Naive thymus-derived CD4-positive, alpha-beta T cell (primary cell): ENCODE measurements at regions of chr17 and their contacts with region 1.

Region 1: GRCh38 chr17:6913608-6914443 is 82.0 kb upstream of the ALOX12 start:
- DNase-seq: peak; percentile 48 to 76 (median 70)
- ATAC-seq: peak; percentile 90
- H3K4me3 ChIP-seq: peak overlapping the region; percentile 45
- H3K4me3 Mint-ChIP-seq: peak overlapping the region; percentile 81 to 93 (median 88)
- H3K27ac ChIP-seq: no peak overlapping the region
- H3K27ac Mint-ChIP-seq: peak overlapping the region in 5 of 9 donors; percentile 12 to 88 (median 38)
- H3K4me1 ChIP-seq: peaks cover 0 to 6% of the 10 kb centered on the region in 2 donors
- H3K4me1 Mint-ChIP-seq: peaks cover 9 to 24% (median 19%) of the 10 kb centered on the region in 7 donors
- H3K27me3 ChIP-seq: no peaks in the 10 kb centered on the region
- H3K27me3 Mint-ChIP-seq: peaks cover 0 to 43% (median 0%) of the 10 kb centered on the region in 5 donors

Region 2: GRCh38 chr17:6924208-6924607 is 10.4 kb after region 1 on chr17:
- CTCF ChIA-PET with region 1: interaction called, 12 read pairs
- POLR2A ChIA-PET with region 1: no interaction called
- intact Hi-C with region 1: no loop called
- DNase-seq: peak in 7 of 9 donors; percentile 37 to 58 (median 43)
- ATAC-seq: peak; percentile 65
- H3K4me3 ChIP-seq: no peak overlapping the region
- H3K4me3 Mint-ChIP-seq: peak overlapping the region; percentile 21 to 70 (median 55)
- H3K27ac ChIP-seq: no peak overlapping the region
- H3K27ac Mint-ChIP-seq: peak overlapping the region in 7 of 9 donors; percentile 2 to 56 (median 17)
- H3K4me1 ChIP-seq: peaks cover 3 to 18% of the 10 kb centered on the region in 2 donors
- H3K4me1 Mint-ChIP-seq: peaks cover 5 to 40% (median 34%) of the 10 kb centered on the region in 7 donors
- H3K27me3 ChIP-seq: no peaks in the 10 kb centered on the region
- H3K27me3 Mint-ChIP-seq: peaks cover 0 to 19% (median 0%) of the 10 kb centered on the region in 5 donors

Region 3: DNA sequence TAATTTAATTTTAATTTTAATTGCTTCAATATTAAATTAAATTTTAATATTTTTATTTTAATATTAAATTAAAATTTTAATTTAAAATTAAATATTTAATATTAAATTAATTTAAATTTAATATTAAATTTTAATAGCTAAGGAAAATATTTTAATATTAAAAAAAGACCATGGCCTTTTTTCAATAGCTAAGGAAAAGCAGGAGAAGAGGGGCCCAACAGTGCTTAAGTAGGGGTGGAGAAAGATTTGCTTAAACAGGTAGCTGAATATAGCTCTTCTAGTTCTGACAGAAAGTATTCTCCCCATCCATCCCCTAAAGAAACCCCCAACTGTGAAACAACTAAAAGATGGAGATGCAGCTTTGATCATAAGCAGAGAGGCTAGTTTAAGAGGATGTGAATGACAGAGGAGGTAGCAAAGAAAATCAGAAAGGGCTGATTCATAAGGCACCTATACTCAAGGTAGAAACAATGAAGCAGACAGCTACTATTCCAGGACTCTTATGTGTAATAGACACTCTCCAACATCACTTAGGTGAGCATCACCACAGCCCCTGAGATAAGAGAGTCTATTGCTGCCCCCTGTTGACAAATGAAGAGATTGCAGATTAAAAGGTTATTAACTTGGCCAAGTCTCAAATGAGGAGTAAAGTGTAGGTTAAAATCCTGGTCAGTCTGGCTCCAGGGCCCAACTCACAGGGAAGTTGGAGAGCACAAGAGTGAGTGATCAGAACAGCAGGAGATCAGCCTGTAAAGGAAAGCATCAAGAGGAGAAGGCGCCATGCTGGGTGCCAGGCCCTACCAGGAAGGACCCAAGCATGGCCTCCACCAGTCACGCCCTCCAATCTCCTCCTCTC is 90.8 kb after region 1 on chr17:
- CTCF ChIA-PET with region 1: interaction called, 121 read pairs
- POLR2A ChIA-PET with region 1: interaction called, 7 read pairs
- intact Hi-C with region 1: loop called (anchors 1 kb)
- DNase-seq: peak in 7 of 9 donors; percentile 67 to 80 (median 77)
- ATAC-seq: peak; percentile 98
- H3K4me3 ChIP-seq: no peak overlapping the region
- H3K4me3 Mint-ChIP-seq: no peak overlapping the region
- H3K27ac ChIP-seq: no peak overlapping the region
- H3K27ac Mint-ChIP-seq: peak overlapping the region in 8 of 9 donors; percentile 5 to 60 (median 31)
- H3K4me1 ChIP-seq: no peaks in the 10 kb centered on the region
- H3K4me1 Mint-ChIP-seq: peaks cover 14 to 42% (median 27%) of the 10 kb centered on the region in 7 donors
- H3K27me3 ChIP-seq: no peaks in the 10 kb centered on the region
- H3K27me3 Mint-ChIP-seq: no peaks in the 10 kb centered on the region

Region 4: DNA sequence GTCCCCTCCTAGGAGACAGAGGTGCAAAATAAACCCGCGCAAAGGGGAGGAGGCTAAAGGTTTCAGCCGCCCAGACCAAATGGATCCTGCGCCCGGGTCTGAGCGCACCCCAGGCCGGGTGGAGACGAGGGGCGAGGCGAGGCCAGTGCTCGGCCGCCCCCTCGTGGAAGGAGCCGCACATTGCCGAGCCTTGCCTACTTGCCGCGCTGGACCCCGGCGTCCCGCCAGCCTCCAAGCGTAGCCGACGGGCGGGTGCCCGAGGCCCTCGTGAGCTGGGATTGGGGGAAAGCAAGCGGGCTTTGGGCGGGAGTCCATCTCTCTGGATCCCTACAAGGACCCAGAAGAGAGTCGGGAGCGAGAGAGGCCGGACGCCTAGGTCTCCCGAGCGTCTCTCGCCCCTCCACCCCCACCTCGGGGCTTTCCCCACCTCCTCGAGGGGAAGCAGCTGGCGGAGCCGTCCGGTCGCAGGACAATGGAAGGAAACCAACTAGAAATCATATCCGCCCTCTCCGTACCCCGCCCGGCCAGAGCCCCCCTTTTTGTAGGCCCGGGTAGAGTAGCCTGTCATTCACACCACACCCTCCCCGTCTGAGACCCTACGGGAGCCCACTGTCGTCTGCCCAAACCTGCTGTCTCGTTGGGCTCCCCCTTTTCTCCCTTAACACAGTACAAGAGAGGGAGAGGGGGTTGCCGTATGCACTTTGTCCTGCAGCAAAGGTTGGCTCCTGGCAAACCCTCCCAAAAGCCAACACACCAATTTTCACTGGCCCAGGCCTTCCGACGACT is 108.4 kb after region 1 on chr17:
- CTCF ChIA-PET with region 1: interaction called, 38 read pairs
- POLR2A ChIA-PET with region 1: interaction called, 3 read pairs
- intact Hi-C with region 1: loop called (anchors 1 kb)
- DNase-seq: peak; percentile 52 to 86 (median 71)
- ATAC-seq: peak; percentile 81
- H3K4me3 ChIP-seq: peak overlapping the region; percentile 44
- H3K4me3 Mint-ChIP-seq: peak overlapping the region; percentile 58 to 84 (median 78)
- H3K27ac ChIP-seq: peak overlapping the region; percentile 48
- H3K27ac Mint-ChIP-seq: peak overlapping the region in 7 of 9 donors; percentile 17 to 92 (median 78)
- H3K4me1 ChIP-seq: peaks cover 21 to 30% of the 10 kb centered on the region in 2 donors
- H3K4me1 Mint-ChIP-seq: peaks cover 17 to 61% (median 30%) of the 10 kb centered on the region in 7 donors
- H3K27me3 ChIP-seq: no peaks in the 10 kb centered on the region
- H3K27me3 Mint-ChIP-seq: no peaks in the 10 kb centered on the region

Region 5: GRCh38 chr17:7136266-7136877 is 222.5 kb after region 1 on chr17:
- CTCF ChIA-PET with region 1: interaction called, 6 read pairs
- POLR2A ChIA-PET with region 1: no interaction called
- intact Hi-C with region 1: loop called (anchors 1 to 5 kb)
- DNase-seq: peak; percentile 53 to 74 (median 71)
- ATAC-seq: peak; percentile 24
- H3K4me3 ChIP-seq: no peak overlapping the region
- H3K4me3 Mint-ChIP-seq: peak overlapping the region in 4 of 10 donors; percentile 32 to 53 (median 44)
- H3K27ac ChIP-seq: no peak overlapping the region
- H3K27ac Mint-ChIP-seq: peak overlapping the region in 4 of 9 donors; percentile 8 to 48 (median 28)
- H3K4me1 ChIP-seq: peaks cover 6 to 20% of the 10 kb centered on the region in 2 donors
- H3K4me1 Mint-ChIP-seq: peaks cover 13 to 34% (median 23%) of the 10 kb centered on the region in 7 donors
- H3K27me3 ChIP-seq: no peaks in the 10 kb centered on the region
- H3K27me3 Mint-ChIP-seq: peaks cover 0 to 24% (median 6%) of the 10 kb centered on the region in 5 donors

Region 6: DNA sequence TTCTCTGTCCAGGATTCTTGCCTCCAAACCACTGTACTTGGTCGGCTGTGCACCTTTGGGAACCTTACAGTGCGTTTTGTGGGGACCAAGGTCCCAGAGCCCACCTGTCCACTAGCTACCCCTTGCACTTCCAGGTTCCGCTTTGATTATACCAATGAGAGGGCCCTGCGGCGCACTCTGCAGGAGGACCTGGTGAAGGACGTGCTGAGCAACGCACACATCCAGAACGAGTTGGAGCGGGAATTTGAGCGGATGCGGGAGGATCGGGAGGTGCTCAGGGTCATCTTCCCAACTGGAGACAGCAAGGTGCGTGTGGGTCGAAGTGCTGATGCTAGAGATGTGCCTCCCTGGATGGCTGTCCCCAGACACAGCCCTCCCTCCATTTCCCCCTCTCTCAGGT is 589.2 kb after region 1 on chr17:
- CTCF ChIA-PET with region 1: no interaction called
- POLR2A ChIA-PET with region 1: no interaction called
- intact Hi-C with region 1: no loop called
- DNase-seq: peak in 2 of 9 donors; percentile 17 to 27
- ATAC-seq: peak; percentile 43
- H3K4me3 ChIP-seq: no peak overlapping the region
- H3K4me3 Mint-ChIP-seq: no peak overlapping the region
- H3K27ac ChIP-seq: no peak overlapping the region
- H3K27ac Mint-ChIP-seq: no peak overlapping the region
- H3K4me1 ChIP-seq: no peaks in the 10 kb centered on the region
- H3K4me1 Mint-ChIP-seq: peaks cover 0 to 3% (median 0%) of the 10 kb centered on the region in 7 donors
- H3K27me3 ChIP-seq: no peaks in the 10 kb centered on the region
- H3K27me3 Mint-ChIP-seq: no peaks in the 10 kb centered on the region